Heart left ventricle (tissue), 16 donors: ENCODE measurements at regions of chr1 and their contacts with region 1.

Region 1: DNA sequence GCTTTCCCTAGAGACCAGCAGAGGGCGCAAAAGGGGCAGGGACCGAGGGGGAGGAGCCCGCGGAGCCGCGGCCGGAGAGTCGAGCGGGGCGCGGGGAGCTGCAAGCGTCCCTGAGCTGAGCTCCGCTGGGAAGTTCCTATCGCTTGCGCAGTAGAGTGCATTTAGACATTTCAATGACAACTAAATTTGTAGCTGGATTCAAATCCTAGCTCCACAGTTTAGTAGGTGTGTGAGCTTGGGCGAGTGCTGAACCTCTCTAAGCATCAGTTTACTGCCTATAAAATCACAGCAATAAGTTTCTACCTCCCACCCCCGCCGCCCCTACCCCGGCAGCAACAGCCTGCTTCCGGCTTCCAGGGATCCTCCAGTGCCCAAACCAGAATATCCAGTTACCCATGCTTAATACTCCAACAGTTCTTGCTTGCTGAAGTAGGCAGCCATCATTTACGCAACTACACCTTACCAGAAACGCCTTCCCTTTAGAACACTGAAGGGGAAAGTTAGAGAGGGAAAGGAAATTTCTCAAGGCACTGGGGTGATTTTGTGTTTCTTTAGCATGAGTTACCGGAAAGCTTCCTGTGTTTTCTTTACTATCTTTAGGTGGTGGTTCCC is 9.1 kb downstream of the TLR5 start:
- DNase-seq: peak; percentile 84 to 92 (median 88)
- ATAC-seq: peak; percentile 83 to 91 (median 90)
- H3K4me3 ChIP-seq: peak overlapping the region in 10 of 12 donors; percentile 23 to 55 (median 43)
- H3K27ac ChIP-seq: peak overlapping the region in 6 of 12 donors; percentile 7 to 68 (median 42)
- H3K4me1 ChIP-seq: peaks cover 0 to 59% (median 18%) of the 10 kb centered on the region in 12 donors
- H3K27me3 ChIP-seq: no peaks in the 10 kb centered on the region
- CTCF ChIP-seq: peak in 11 of 12 donors; percentile 92 to 99 (median 96)
- POLR2A ChIP-seq: no peak

Region 2: DNA sequence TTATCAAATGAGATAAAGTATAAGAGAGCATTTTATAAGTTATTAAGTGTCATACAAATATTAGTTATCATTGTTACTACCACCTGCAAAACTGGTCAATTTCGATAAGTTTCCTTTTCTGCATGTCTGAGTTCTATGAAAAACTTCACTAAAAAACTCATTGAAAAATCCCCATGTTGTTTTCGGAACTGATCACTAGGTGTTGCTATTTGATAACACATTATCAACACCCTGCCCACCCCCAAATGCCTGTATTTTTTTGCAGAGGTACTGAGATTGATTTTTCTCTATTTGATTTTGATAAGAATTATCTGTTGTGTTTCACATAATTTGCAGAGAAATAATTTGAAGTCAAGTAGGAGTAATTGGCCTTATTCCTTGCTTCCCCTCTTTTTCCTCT is 341.2 kb before region 1 on chr1:
- intact Hi-C with region 1: loop called in 4 of 10 experiments (anchors 2 to 10 kb)
- DNase-seq: no peak
- ATAC-seq: no peak
- H3K4me3 ChIP-seq: no peak overlapping the region
- H3K27ac ChIP-seq: no peak overlapping the region
- H3K4me1 ChIP-seq: peaks cover 0 to 4% (median 0%) of the 10 kb centered on the region in 12 donors
- H3K27me3 ChIP-seq: no peaks in the 10 kb centered on the region
- CTCF ChIP-seq: peak; percentile 9 to 74 (median 61)
- POLR2A ChIP-seq: no peak

Region 3: GRCh38 chr1:223199094-223199647 is 65.2 kb after region 1 on chr1:
- intact Hi-C with region 1: loop called in 1 of 10 experiments (anchors 2 kb)
- DNase-seq: no peak
- ATAC-seq: no peak
- H3K4me3 ChIP-seq: no peak overlapping the region
- H3K27ac ChIP-seq: no peak overlapping the region
- H3K4me1 ChIP-seq: peaks cover 0 to 6% (median 0%) of the 10 kb centered on the region in 12 donors
- H3K27me3 ChIP-seq: no peaks in the 10 kb centered on the region
- CTCF ChIP-seq: no peak
- POLR2A ChIP-seq: no peak

Region 4: DNA sequence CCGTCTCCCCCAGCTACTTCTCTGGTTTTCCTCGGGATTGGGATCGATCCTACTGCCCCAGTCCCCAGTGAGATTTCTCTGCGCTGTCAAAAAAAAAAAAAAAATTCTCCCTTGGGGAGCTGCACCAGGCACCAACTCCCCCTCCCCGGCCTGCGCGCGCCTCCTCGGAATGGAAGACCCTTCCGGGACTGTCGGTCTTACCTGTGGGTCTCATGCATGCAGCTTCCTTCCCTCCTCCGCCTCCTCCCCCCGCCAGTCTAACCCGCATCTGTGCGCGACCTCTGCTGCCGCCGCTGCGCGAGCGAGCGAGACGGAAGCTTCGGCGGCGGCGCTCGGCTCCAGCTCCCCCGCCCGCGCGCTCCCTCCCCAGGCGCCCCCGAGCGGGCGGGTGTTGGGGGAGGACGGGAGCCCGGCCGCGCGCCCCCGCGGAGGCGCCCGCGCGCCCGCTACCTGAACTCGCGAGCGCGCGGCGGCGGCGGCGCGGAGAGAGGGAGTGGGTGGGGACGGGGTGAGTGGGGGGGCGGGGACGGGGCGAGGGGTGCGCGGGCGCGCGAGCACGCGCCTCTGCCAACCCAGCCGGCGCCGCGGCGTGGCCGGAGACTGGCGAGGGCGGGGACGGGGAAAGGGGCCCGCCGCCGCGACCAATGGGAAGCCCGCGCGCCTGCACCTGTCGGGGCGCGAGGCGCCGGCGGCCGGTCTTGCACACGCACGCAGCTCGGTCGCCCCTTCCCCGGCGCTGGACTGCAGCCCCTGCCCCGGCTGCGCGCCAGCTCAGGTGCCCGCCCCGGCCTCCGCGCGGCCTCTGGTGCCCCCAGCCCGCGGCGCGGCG is 230.1 kb after region 1 on chr1 and contains the start of gene SUSD4:
- intact Hi-C with region 1: loop called in 1 of 10 experiments (anchors 5 kb)
- DNase-seq: peak in 3 of 5 donors; percentile 29 to 67 (median 51)
- ATAC-seq: peak in 3 of 4 donors; percentile 71 to 87 (median 80)
- H3K4me3 ChIP-seq: peak within 1 kb of the TSS; percentile 39 to 77 (median 54)
- H3K27ac ChIP-seq: peak within 1 kb of the TSS in 4 of 12 donors; percentile 29 to 48 (median 47)
- H3K4me1 ChIP-seq: peaks cover 0 to 25% (median 15%) of the 10 kb centered on the region in 12 donors
- H3K27me3 ChIP-seq: peaks cover 0 to 55% (median 4%) of the 10 kb centered on the region in 9 donors
- CTCF ChIP-seq: no peak
- POLR2A ChIP-seq: no peak
- total RNA-seq, gene SUSD4: 1.4 to 27.2 (median 2.4) TPM

Region 5: DNA sequence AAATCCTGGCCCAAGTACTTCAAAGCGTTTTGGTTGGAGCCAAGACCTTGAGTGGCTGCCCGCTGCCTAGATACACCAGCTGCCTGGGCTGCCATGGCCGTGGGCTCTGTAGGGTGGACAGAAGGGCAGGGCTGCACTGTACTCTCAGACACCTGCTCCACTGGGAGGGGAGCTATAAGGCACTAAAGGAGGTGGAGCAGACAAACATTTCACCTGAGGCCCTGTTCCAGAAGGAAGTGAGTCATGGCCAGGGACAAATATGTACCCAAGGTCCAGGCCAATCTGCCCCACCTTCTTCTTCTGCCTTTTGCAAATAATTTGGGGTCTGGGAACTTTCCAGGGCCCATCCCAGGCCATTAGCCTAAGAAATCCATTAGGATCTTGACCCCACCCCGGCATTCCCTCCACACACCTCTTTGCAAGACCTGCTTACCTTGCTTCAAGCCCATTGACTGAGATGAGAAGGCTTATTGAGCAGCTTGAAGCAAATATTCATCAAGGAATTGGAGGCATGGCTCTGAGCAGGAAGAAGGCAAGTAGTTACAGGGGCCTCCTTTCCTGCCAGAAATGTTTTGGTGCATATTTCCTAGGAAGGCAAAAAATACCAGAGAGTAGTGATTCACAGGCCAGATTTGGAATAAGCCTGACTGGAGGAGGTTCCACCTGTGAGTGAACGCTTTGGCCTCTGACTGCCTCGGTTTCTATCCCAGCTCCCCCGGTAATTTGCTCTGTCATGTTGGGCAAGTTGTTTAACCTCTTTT is 531.8 kb after region 1 on chr1 and contains the start of gene CAPN8:
- intact Hi-C with region 1: loop called in 1 of 10 experiments (anchors 5 kb)
- DNase-seq: no peak
- ATAC-seq: no peak
- H3K4me3 ChIP-seq: no peak within 1 kb of the TSS
- H3K27ac ChIP-seq: no peak within 1 kb of the TSS
- H3K4me1 ChIP-seq: no peaks in the 10 kb centered on the region
- H3K27me3 ChIP-seq: no peaks in the 10 kb centered on the region
- CTCF ChIP-seq: no peak
- POLR2A ChIP-seq: no peak
- total RNA-seq, gene CAPN8: not detected